ENCODE measurements at regions of chr9 and their contacts with region 1.

Region 1: GRCh38 chr9:133406480-133407307 is 11.1 kb downstream of the REXO4 start:
- DNase-seq: peak; percentile 69 to 76
- ATAC-seq: peak; percentile 84

Region 2: GRCh38 chr9:133149126-133150107 is 257.3 kb before region 1 on chr9:
- intact Hi-C with region 1: no loop called
- DNase-seq: peak; percentile 92
- ATAC-seq: peak; percentile 76

Region 3: GRCh38 chr9:133485361-133486260 is 78.9 kb after region 1 on chr9:
- intact Hi-C with region 1: loop called (anchors 2 to 5 kb)
- DNase-seq: no peak
- ATAC-seq: peak; percentile 37